ENCODE measurements at regions of chr10 and their contacts with region 1.

Region 1: DNA sequence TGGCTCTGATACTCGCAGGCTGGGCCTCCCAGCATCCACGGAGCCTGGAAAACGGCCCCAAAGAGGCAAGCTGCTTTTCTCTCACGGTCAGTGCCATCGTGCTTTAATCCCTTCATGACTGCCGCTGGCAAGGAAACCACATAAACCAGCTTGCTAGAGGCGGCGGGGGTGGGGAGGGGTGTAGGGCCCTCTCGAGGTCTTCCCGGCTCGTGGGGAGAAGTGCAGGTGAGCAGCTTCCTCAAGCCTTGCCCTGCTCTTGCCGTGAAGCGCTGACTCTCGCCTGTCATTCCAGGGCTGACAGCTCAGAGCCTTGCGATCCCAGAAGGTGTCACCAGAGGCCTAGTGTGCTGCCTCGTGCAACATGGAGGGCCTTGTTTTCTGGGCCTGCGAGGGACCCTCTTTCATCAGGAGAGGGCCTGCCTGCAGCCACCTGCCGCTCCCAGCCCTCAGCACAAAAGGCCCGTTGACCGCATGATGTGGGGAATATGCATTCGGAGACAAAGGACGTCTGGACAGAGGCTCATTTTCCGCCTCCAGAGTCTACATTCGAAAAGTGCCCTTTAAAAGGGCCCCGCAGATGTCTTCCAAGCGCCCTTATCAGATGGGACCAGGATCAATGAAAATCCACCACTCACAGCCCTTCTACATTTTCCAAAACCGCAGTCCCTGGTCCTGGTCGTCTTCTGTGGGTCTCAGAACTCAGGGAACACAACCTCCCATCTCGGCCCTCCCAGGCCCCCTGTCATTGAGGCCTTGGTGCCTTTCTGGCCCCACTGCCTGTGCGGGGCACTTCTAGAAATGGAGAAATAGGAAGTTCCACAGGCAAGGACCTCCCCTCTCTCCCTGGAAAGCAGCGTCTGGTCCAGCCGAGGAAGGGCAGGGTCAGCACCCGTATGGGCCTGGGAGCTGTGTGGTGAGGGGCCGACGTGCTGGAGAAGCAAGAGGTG is 58.7 kb downstream of the ZRANB1 start:
- DNase-seq: peak; percentile 57
- ATAC-seq: peak; percentile 11; the same call in 1 of the 2 replicates
- H3K4me3 ChIP-seq: no peak overlapping the region
- H3K27ac ChIP-seq: peak overlapping the region; percentile 59; the same call in 1 of the 2 replicates
- H3K4me1 ChIP-seq: peaks cover 32% of the 10 kb centered on the region
- H3K27me3 ChIP-seq: no peaks in the 10 kb centered on the region
- CTCF ChIP-seq: peak; percentile 36
- POLR2A ChIP-seq: no peak
- RAD21 ChIP-seq: peak; percentile 48; the same call in 1 of the 2 replicates

Region 2: DNA sequence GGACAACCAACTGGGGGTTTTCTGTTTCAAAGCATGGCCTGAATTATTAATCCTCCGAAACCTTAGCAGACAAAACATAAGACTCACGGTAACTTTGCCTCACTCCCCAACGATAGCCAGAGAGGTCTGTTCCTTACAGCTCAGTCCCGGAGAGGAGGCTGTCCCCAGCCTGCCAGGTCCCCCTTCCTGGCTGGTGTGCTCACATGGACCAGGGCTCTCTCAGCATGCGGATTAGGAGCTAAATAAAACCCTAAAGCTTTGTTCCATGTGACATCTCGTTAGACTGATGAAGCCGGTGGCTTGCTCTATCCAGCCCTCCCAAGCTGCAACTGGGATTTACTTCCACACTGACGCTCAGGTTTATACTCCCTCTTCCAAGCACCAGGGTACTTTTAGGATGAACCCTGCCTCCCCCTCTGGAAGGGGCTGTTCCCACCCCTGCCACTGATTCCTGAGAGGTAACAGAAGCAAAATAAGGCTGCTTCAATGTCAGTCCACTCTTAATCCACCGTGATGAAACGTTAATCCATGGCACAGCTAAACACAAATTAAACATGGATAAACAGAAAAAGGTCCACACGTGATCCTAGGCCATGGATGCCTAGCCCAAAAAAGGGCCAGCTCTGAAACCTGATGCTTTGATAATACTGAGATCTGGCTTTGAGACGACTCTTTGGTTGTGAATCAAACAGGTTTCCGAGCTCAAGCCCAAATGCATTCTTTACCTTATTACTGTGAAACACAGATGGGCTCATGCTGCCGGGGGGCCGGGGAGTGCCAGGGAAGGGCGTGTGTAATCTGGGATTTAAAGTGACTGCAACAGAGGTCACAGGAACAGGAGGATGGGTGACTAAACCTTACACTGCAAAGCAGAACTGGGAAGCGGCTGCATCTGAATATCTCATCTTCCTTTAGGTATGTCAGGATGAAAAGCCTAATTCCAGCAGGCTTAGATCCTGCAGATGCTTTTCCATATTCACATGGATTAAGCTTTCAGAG is 27.5 kb after region 1 on chr10:
- CTCF ChIA-PET with region 1: no interaction called
- POLR2A ChIA-PET with region 1: no interaction called
- dilution Hi-C with region 1: no loop called
- in situ Hi-C with region 1: no loop called
- intact Hi-C with region 1: loop called (anchors 2 kb)
- DNase-seq: peak; percentile 29
- ATAC-seq: no peak
- H3K4me3 ChIP-seq: no peak overlapping the region
- H3K27ac ChIP-seq: no peak overlapping the region
- H3K4me1 ChIP-seq: peaks cover 26% of the 10 kb centered on the region
- H3K27me3 ChIP-seq: no peaks in the 10 kb centered on the region
- CTCF ChIP-seq: no peak
- POLR2A ChIP-seq: no peak
- RAD21 ChIP-seq: no peak

Region 3: GRCh38 chr10:125700355-125700911 is 699.8 kb after region 1 on chr10:
- CTCF ChIA-PET with region 1: no interaction called
- POLR2A ChIA-PET with region 1: no interaction called
- dilution Hi-C with region 1: no loop called
- in situ Hi-C with region 1: no loop called
- intact Hi-C with region 1: no loop called
- DNase-seq: peak; percentile 53
- ATAC-seq: peak; percentile 70
- H3K4me3 ChIP-seq: no peak overlapping the region
- H3K27ac ChIP-seq: no peak overlapping the region
- H3K4me1 ChIP-seq: no peaks in the 10 kb centered on the region; the same call in 1 of the 2 replicates
- H3K27me3 ChIP-seq: peaks cover 4% of the 10 kb centered on the region; the same call in 1 of the 2 replicates
- CTCF ChIP-seq: peak; percentile 43
- POLR2A ChIP-seq: no peak
- RAD21 ChIP-seq: peak; percentile 48

Region 4: DNA sequence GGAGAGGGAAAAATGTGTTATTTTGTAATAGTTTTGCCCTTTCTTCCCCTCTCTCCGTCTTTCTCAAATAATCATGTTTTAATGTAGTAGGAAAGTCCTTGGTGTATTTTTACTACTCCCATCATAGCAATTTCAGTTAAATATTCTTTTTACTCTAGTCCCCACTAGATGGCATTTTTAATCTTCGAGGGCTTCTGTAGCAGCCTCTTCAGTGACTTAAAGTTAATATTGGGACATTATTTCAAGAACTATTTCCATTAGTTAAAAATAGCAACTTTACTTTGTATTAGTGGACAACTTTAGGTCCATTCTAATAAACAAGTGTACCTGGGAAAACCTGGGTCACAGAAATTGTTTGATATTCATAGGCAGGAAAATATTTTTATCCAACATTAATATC is 741.8 kb after region 1 on chr10:
- CTCF ChIA-PET with region 1: no interaction called
- POLR2A ChIA-PET with region 1: no interaction called
- dilution Hi-C with region 1: no loop called
- in situ Hi-C with region 1: no loop called
- intact Hi-C with region 1: no loop called
- DNase-seq: no peak
- ATAC-seq: peak; percentile 29; the same call in 1 of the 2 replicates
- H3K4me3 ChIP-seq: no peak overlapping the region
- H3K27ac ChIP-seq: no peak overlapping the region
- H3K4me1 ChIP-seq: no peaks in the 10 kb centered on the region
- H3K27me3 ChIP-seq: no peaks in the 10 kb centered on the region
- CTCF ChIP-seq: 0 out of 2 replicates have a peak, but pooled peaks have one; percentile 8
- POLR2A ChIP-seq: no peak
- RAD21 ChIP-seq: no peak

Measured in IMR-90 (cell line).